Activated B cell treated with CpG ODN at 0.5 μM for 24 hours (primary cell): ENCODE measurements at regions of chr16 and their contacts with region 1.

Region 1: GRCh38 chr16:30091474-30092372 is at the start of gene TBX6:
- DNase-seq: peak; percentile 93
- ATAC-seq: peak; percentile 77
- H3K4me3 Mint-ChIP-seq: peak within 1 kb of the TSS; percentile 89
- H3K27ac Mint-ChIP-seq: peak within 1 kb of the TSS; percentile 94
- H3K4me1 Mint-ChIP-seq: peaks cover 50% of the 10 kb centered on the region
- H3K27me3 Mint-ChIP-seq: no peaks in the 10 kb centered on the region
- CTCF ChIP-seq: peak; percentile 67
- total RNA-seq, gene TBX6: 2.3 TPM in 2 replicates

Region 2: GRCh38 chr16:30052671-30053372 is 38.9 kb before region 1 on chr16:
- CTCF ChIA-PET with region 1: interaction called, 3 read pairs
- POLR2A ChIA-PET with region 1: interaction called, 3 read pairs
- intact Hi-C with region 1: loop called (anchors 1 kb)
- DNase-seq: peak; percentile 86
- ATAC-seq: peak; percentile 87
- H3K4me3 Mint-ChIP-seq: peak overlapping the region; percentile 84
- H3K27ac Mint-ChIP-seq: peak overlapping the region; percentile 46
- H3K4me1 Mint-ChIP-seq: peaks cover 9% of the 10 kb centered on the region
- H3K27me3 Mint-ChIP-seq: no peaks in the 10 kb centered on the region
- CTCF ChIP-seq: no peak

Region 3: GRCh38 chr16:30112197-30113030 is 20.7 kb after region 1 on chr16:
- CTCF ChIA-PET with region 1: interaction called, 9 read pairs
- POLR2A ChIA-PET with region 1: interaction called, 6 read pairs
- intact Hi-C with region 1: loop called (anchors 1 kb)
- DNase-seq: peak; percentile 37
- ATAC-seq: peak; percentile 61
- H3K4me3 Mint-ChIP-seq: no peak overlapping the region
- H3K27ac Mint-ChIP-seq: no peak overlapping the region
- H3K4me1 Mint-ChIP-seq: peaks cover 5% of the 10 kb centered on the region
- H3K27me3 Mint-ChIP-seq: no peaks in the 10 kb centered on the region
- CTCF ChIP-seq: no peak

Region 4: DNA sequence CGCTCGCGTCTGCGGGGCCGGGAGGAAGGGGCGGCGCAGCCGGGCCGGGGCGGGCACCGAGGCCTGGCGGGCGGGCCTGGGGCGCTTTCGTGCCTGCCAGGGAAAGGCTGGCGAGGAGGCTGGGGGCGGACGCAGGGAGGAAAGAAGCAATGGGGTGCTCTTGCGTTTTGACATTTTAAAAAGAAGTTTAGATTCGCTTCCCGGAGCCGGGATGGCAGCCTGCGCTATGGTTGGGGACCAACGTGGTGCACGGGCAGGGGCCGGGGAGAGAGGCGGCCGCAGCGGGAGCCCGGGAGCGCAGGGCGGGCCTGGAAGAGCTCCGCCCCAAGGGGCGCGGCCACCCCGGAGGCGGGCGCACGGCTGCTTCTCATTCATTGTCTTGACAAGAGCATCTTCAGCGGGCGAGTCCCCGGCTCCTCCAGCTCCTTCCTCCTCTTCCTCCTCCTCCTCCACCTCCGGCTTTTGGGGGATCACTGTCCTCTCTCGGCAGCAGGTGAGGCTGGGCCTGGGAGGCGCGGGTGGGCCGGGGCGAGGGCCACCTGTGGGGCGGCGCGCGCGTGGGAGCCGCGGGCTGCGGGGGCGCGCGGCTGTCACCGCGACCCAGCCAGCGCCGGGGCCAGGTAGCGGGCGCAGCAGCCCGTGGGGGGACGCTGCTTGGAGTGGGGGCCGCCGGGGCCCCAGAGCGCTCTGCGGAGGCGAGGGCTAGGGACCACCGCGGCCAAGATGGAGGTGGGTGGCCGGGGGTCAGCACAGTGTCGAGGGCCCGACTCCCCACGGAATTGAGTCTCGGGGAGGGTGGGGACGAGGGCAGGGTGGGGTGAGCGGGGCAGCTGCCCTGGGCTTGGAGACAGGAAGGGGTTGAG is 91.7 kb after region 1 on chr16 and contains the start of gene CORO1A:
- CTCF ChIA-PET with region 1: interaction called, 33 read pairs
- POLR2A ChIA-PET with region 1: interaction called, 335 read pairs
- intact Hi-C with region 1: loop called (anchors 1 kb)
- DNase-seq: peak; percentile 86
- ATAC-seq: peak; percentile 60
- H3K4me3 Mint-ChIP-seq: peak within 1 kb of the TSS; percentile 98
- H3K27ac Mint-ChIP-seq: peak within 1 kb of the TSS; percentile 97
- H3K4me1 Mint-ChIP-seq: peaks cover 41% of the 10 kb centered on the region
- H3K27me3 Mint-ChIP-seq: no peaks in the 10 kb centered on the region
- CTCF ChIP-seq: no peak
- total RNA-seq, gene CORO1A: 1,030 and 1,060 TPM in 2 replicates

Region 5: GRCh38 chr16:30370444-30371247 is 278.9 kb after region 1 on chr16 and contains the start of gene TBC1D10B:
- CTCF ChIA-PET with region 1: interaction called, 7 read pairs
- POLR2A ChIA-PET with region 1: no interaction called
- intact Hi-C with region 1: loop called (anchors 2 kb)
- DNase-seq: peak; percentile 92
- ATAC-seq: peak; percentile 83
- H3K4me3 Mint-ChIP-seq: peak within 1 kb of the TSS; percentile 87
- H3K27ac Mint-ChIP-seq: peak within 1 kb of the TSS; percentile 86
- H3K4me1 Mint-ChIP-seq: peaks cover 52% of the 10 kb centered on the region
- H3K27me3 Mint-ChIP-seq: no peaks in the 10 kb centered on the region
- CTCF ChIP-seq: no peak
- total RNA-seq, gene TBC1D10B: 46.3 and 50.2 TPM in 2 replicates

Region 6: DNA sequence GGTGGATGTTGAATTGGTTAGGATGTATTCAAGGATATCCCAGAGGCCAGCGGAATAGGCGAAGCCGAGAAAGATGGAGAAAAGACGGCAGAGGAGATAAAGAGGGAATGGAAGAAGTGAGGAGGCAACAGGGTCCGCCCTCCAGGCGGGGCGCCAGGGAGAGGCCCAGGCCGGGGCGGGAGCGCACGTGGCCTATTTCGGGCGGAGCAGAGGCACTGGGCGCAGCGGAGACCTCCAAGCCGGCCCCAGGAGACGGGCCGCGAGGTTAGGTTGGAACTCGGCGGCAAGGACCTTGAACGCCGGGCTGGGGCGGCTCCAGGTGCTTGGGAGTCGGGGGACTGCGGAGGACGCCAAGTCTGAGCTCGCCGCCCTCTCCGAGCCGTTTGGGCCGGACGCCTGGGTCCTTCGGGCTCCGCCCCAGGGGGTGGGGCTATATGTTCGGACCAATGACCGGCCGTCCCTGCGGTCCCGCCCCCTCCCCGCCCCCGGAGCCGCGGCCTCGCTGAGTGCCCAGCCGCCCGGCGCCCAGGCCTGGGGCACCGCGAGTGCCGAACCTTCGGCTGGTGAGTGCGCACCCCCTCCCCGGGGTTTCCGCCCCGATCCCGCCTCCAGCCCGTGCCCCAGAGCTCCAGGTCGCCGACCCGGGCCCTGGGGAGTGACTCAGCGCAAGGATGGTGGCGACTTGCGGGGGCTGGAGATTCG is 315.5 kb after region 1 on chr16 and contains the start of gene ZNF771:
- CTCF ChIA-PET with region 1: interaction called, 14 read pairs
- POLR2A ChIA-PET with region 1: interaction called, 9 read pairs
- intact Hi-C with region 1: loop called (anchors 2 kb)
- DNase-seq: peak; percentile 90
- ATAC-seq: peak; percentile 89
- H3K4me3 Mint-ChIP-seq: peak within 1 kb of the TSS; percentile 89
- H3K27ac Mint-ChIP-seq: peak within 1 kb of the TSS; percentile 90
- H3K4me1 Mint-ChIP-seq: peaks cover 27% of the 10 kb centered on the region
- H3K27me3 Mint-ChIP-seq: no peaks in the 10 kb centered on the region
- CTCF ChIP-seq: no peak
- total RNA-seq, gene ZNF771: 4.4 and 5.2 TPM in 2 replicates